ENCODE measurements at regions of chr13 and their contacts with region 1.

Region 1: DNA sequence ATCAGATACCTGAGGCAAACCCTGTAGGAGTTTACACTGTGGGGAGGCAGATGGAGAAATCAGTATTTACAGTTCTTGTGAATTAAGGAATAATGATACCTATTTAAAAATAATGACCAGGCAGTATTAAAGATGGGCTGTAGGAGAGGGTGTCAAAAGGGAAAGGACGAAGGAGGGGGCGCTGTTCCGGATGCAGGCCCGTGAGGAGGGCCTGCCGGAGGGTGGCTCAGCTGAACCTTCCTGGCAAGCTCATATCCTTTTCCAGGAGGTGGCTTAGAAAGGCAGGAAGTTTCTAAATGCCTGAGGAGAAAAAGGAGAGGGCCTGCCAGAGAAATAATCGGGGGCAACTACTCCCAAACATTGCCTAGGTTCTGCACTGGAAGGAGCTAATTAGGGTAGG is 46.6 kb downstream of the MBNL2 start:
- DNase-seq: no peak
- H3K4me3 ChIP-seq: no peak overlapping the region
- H3K27ac ChIP-seq: no peak overlapping the region
- H3K4me1 ChIP-seq: peaks cover 11 to 22% (median 16%) of the 10 kb centered on the region in 4 experiments
- H3K27me3 ChIP-seq: no peaks in the 10 kb centered on the region; a peak in 1 of 7 replicates
- CTCF ChIP-seq: peak; percentile 13 to 28 (median 21); a peak in 3 of 4 replicates
- EP300 ChIP-seq: no peak
- POLR2A ChIP-seq: no peak
- RAD21 ChIP-seq: peak in 1 of 2 experiments; percentile 12; a peak in 1 of 4 replicates

Region 2: GRCh38 chr13:97221989-97222700 is 46.6 kb before region 1 on chr13 and contains the start of gene MBNL2:
- CTCF ChIA-PET with region 1: interaction called, 25 read pairs
- POLR2A ChIA-PET with region 1: interaction called, 3 read pairs
- DNase-seq: peak; percentile 39 to 79
- H3K4me3 ChIP-seq: peak within 1 kb of the TSS; percentile 44 to 65 (median 53); a peak in 7 of 8 replicates
- H3K27ac ChIP-seq: no peak within 1 kb of the TSS
- H3K4me1 ChIP-seq: peaks cover 1 to 16% (median 9%) of the 10 kb centered on the region in 4 experiments; a peak in 6 of 7 replicates
- H3K27me3 ChIP-seq: peaks cover 15 to 44% (median 36%) of the 10 kb centered on the region in 4 experiments
- CTCF ChIP-seq: no peak
- EP300 ChIP-seq: no peak
- POLR2A ChIP-seq: peak in 1 of 2 experiments; percentile 41; a peak in 1 of 3 replicates
- RAD21 ChIP-seq: no peak
- total RNA-seq, gene MBNL2: 2.6 and 3.2 TPM in 2 replicates

Region 3: DNA sequence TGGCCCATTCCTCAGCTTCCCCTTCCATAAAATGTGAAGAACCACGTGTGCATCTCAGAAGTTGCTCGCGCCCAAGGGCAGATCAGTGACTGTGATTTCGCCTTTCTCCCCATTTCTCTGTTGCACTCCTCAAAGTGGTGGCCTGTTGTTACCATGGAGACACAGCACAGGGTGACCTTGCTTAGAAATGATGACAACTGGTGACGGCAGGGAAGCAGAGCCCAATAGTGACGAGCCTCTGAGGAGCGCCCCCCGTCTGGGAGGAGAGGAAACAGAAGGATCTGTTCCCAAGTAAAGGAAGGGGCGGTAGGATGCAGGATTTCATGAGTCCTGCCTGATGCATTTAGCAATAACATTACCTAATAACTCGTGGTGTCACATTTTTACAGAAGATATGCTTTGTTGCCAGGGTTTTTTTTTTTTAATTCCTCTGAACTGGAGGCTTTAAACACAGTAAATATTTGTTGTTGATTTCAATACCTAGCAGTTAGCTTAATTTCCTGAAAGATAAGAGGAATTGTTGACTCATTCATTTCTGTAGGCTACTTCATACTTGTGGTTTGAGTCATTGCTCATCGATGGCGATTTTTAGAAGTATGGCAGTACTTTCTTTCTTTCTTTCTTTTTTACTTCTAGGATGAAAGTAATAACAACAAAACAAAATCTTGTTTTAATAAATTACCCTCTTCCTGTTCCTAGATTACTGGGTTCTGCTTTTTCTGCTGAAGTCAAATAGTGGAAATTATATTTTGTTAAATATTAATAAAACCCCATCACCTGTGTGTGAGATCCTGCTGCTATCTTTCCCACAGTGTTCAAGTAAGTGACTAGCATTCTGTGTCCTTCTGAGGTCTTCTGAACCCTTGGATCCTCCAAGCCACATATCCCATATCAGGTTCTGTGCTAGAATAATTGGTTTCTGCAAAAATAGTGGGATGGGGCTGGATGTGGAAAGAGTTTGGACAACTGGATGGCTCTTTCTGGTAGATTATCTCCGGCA is 10.7 kb before region 1 on chr13:
- CTCF ChIA-PET with region 1: interaction called, 25 read pairs
- POLR2A ChIA-PET with region 1: interaction called, 5 read pairs
- DNase-seq: no peak
- H3K4me3 ChIP-seq: no peak overlapping the region
- H3K27ac ChIP-seq: no peak overlapping the region
- H3K4me1 ChIP-seq: peaks cover 3 to 13% (median 10%) of the 10 kb centered on the region in 4 experiments; a peak in 5 of 7 replicates
- H3K27me3 ChIP-seq: no peaks in the 10 kb centered on the region
- CTCF ChIP-seq: peak in 2 of 3 experiments; percentile 13 to 47; a peak in 2 of 4 replicates
- EP300 ChIP-seq: no peak
- POLR2A ChIP-seq: no peak
- RAD21 ChIP-seq: peak in 1 of 2 experiments; percentile 23; a peak in 1 of 4 replicates